ENCODE measurements at regions of chr18 and their contacts with region 1.

Region 1: GRCh38 chr18:59233017-59233410 is 13.1 kb downstream of the GRP start:
- DNase-seq: no peak
- ATAC-seq: no peak
- H3K4me3 ChIP-seq: no peak overlapping the region
- H3K4me3 Mint-ChIP-seq: no peak overlapping the region
- H3K27ac ChIP-seq: no peak overlapping the region
- H3K27ac Mint-ChIP-seq: no peak overlapping the region
- H3K4me1 ChIP-seq: no peaks in the 10 kb centered on the region
- H3K4me1 Mint-ChIP-seq: no peaks in the 10 kb centered on the region
- H3K27me3 ChIP-seq: no peaks in the 10 kb centered on the region
- H3K27me3 Mint-ChIP-seq: peaks cover 36 to 39% of the 10 kb centered on the region in 2 donors

Region 2: DNA sequence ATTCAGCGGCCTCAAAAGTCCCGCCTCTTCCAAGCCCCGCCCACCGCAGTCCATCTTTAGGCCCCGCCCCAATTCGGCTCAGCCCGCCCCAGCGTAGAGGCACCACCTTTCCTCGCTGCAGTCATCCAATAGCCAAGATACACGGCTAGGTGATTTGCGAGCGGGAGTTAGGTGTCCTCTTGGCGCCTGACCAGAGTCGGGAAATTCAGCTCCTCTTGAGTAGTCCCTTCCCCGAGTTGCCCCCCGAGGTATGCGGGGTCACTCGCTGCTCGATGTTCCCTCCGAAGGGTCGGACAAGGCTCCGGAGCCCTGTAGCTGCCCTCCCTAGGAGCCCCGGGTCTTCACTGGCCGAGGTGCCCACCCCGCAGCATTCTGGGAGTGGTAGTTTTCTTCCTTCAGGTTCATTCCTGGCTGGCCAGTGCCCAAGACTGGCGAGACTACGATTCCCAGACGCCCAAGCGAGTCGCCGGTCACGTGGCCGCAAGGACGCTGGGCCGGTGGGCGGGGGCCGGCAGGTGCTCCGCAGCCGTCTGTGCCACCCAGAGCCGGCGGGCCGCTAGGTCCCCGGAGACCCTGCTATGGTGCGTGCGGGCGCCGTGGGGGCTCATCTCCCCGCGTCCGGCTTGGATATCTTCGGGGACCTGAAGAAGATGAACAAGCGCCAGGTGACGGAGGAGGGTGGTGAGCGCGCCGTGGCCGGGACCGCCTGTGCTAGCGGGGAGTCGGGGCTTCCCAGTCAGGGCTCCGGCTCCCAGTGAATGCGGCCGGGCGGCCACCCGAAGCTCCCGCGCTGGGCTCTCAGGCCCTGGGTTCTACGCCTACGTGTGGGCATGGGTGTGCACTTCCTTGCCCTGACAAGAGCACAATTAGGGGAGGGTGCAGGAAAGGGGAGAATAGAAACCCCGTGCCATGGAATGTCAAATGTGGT is 93.4 kb before region 1 on chr18 and contains the start of gene SEC11C:
- CTCF ChIA-PET with region 1: no interaction called
- POLR2A ChIA-PET with region 1: interaction called in 1 of 2 experiments, 14 read pairs
- DNase-seq: peak; percentile 91 to 98 (median 95)
- ATAC-seq: peak; percentile 90 to 94 (median 90)
- H3K4me3 ChIP-seq: peak within 1 kb of the TSS; percentile 81 to 96
- H3K4me3 Mint-ChIP-seq: peak within 1 kb of the TSS; percentile 90 to 92 (median 90)
- H3K27ac ChIP-seq: peak within 1 kb of the TSS; percentile 96
- H3K27ac Mint-ChIP-seq: peak within 1 kb of the TSS; percentile 100
- H3K4me1 ChIP-seq: peaks cover 16 to 21% of the 10 kb centered on the region in 2 experiments
- H3K4me1 Mint-ChIP-seq: peaks cover 38 to 45% (median 43%) of the 10 kb centered on the region in 3 donors
- H3K27me3 ChIP-seq: no peaks in the 10 kb centered on the region
- H3K27me3 Mint-ChIP-seq: peaks cover 9 to 13% of the 10 kb centered on the region in 2 donors
- total RNA-seq, gene SEC11C: 44.9 to 64.6 (median 51.0) TPM

Region 3: GRCh38 chr18:59269563-59270119 is 36.6 kb after region 1 on chr18:
- CTCF ChIA-PET with region 1: no interaction called
- POLR2A ChIA-PET with region 1: interaction called in 1 of 2 experiments, 10 read pairs
- DNase-seq: no peak
- ATAC-seq: no peak
- H3K4me3 ChIP-seq: peak overlapping the region in 1 of 2 donors; percentile 38
- H3K4me3 Mint-ChIP-seq: peak overlapping the region; percentile 22 to 65 (median 34)
- H3K27ac ChIP-seq: no peak overlapping the region
- H3K27ac Mint-ChIP-seq: peak overlapping the region in 1 of 2 donors; percentile 2
- H3K4me1 ChIP-seq: peaks cover 0 to 41% of the 10 kb centered on the region in 2 experiments
- H3K4me1 Mint-ChIP-seq: peaks cover 28 to 46% (median 39%) of the 10 kb centered on the region in 3 donors
- H3K27me3 ChIP-seq: peaks cover 36 to 81% of the 10 kb centered on the region in 2 experiments
- H3K27me3 Mint-ChIP-seq: peaks cover 63 to 82% of the 10 kb centered on the region in 2 donors

Measured in T-cell (primary cell).